Heart left ventricle (tissue), 16 donors: ENCODE measurements at regions of chr14 and their contacts with region 1.

Region 1: GRCh38 chr14:49971156-49972130 is 78.6 kb downstream of the ARF6 start:
- DNase-seq: no peak
- ATAC-seq: peak; percentile 19 to 75 (median 61)
- H3K4me3 ChIP-seq: peak overlapping the region in 1 of 12 donors; percentile 18
- H3K27ac ChIP-seq: peak overlapping the region in 11 of 12 donors; percentile 40 to 95 (median 64)
- H3K4me1 ChIP-seq: peaks cover 4 to 62% (median 37%) of the 10 kb centered on the region in 12 donors
- H3K27me3 ChIP-seq: no peaks in the 10 kb centered on the region
- CTCF ChIP-seq: no peak
- POLR2A ChIP-seq: no peak

Region 2: DNA sequence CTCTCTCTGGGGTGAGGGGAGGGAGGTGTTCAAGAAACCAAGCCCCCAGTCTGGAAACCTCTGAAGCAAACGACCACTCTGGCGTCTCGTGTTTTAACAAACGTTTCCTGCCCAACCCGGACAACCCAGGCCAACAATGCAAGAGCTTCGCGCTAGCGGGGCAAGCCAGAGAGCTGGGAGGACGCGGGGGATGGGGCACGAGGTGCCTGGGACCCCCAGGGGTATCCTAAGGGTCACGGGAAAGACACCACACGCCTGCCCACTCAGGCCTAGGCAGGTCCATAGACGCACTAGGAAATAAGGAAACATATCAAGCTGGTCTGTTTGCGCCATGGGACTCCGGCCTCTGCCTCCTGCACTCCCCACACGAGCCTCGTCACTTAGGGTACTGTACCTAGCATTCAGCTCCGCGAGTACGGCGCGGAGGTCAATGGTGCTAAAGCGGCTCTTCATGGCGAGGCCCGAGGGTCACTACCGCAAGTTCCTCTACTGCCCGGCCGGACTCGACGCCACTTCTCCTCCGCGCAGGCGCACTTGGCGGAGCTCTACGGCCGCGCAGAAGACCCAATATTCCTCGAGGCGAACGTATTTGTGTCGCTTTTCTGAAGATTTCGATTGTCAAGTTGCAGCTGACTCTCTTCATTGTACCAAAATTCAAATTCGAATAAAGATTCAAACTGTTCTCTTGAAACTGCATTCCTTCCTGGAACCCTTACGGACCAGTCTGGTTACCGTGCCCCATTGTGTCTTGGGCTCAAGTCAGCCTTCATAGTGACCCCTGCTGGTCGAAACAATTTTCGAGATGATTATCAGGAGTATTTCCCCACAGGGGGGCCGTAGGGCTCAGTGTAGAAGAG is 118.9 kb before region 1 on chr14 and contains the start of gene NEMF:
- intact Hi-C with region 1: no loop called
- DNase-seq: peak; percentile 87 to 94 (median 91)
- ATAC-seq: peak; percentile 91 to 92 (median 92)
- H3K4me3 ChIP-seq: peak within 1 kb of the TSS; percentile 55 to 97 (median 79)
- H3K27ac ChIP-seq: peak within 1 kb of the TSS; percentile 9 to 98 (median 90)
- H3K4me1 ChIP-seq: peaks cover 0 to 46% (median 17%) of the 10 kb centered on the region in 12 donors
- H3K27me3 ChIP-seq: no peaks in the 10 kb centered on the region
- CTCF ChIP-seq: peak; percentile 64 to 96 (median 80)
- POLR2A ChIP-seq: peak in 1 of 2 donors; percentile 43
- total RNA-seq, gene NEMF: 26.7 to 69.7 (median 52.8) TPM

Region 3: DNA sequence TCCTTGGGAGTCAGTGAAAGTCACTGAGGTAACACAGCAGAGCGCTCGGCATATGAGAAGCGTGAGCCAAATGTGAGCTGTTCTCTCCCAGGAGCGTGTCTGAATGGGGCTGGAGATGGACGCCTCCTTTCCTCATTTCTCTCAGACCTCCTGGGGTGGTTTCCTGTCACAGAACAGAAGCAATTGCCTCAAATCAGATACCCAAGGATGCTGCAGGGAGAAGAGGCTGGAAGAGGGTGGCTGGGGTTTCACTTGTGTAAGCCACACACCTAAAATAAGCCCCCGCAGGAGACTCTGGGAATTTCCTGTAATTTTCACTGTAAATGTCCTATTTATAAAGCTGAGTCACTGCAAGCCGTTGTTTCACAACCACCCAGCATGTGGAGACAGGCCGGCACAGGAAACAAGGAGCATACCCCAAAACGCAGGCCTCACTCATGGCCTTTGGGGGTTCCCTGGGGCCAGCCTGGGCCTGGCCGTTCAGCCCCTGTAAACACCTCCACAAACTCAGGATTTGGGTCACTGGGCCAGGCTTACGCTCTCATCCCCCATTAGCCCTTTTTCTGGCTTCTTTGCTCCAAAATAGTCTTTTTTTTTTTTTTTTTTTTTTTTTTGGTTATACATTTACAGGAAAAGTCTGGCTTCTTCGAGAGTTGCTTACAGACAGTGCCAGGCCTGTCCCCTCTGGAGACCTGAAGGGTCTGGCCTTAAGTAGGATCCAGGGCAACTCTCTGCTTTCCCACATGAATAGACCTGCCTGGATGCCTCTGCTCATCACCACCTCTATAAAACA is 89.6 kb after region 1 on chr14:
- intact Hi-C with region 1: loop called in 1 of 10 experiments (anchors 5 kb)
- DNase-seq: peak in 3 of 5 donors; percentile 56 to 63 (median 63)
- ATAC-seq: peak; percentile 53 to 89 (median 78)
- H3K4me3 ChIP-seq: peak overlapping the region in 1 of 12 donors; percentile 15
- H3K27ac ChIP-seq: peak overlapping the region; percentile 5 to 91 (median 73)
- H3K4me1 ChIP-seq: peaks cover 5 to 79% (median 25%) of the 10 kb centered on the region in 12 donors
- H3K27me3 ChIP-seq: no peaks in the 10 kb centered on the region
- CTCF ChIP-seq: peak in 5 of 12 donors; percentile 3 to 22 (median 15)
- POLR2A ChIP-seq: no peak